HCT116 (cell line): ENCODE measurements at regions of chr19 and their contacts with region 1.

Region 1: DNA sequence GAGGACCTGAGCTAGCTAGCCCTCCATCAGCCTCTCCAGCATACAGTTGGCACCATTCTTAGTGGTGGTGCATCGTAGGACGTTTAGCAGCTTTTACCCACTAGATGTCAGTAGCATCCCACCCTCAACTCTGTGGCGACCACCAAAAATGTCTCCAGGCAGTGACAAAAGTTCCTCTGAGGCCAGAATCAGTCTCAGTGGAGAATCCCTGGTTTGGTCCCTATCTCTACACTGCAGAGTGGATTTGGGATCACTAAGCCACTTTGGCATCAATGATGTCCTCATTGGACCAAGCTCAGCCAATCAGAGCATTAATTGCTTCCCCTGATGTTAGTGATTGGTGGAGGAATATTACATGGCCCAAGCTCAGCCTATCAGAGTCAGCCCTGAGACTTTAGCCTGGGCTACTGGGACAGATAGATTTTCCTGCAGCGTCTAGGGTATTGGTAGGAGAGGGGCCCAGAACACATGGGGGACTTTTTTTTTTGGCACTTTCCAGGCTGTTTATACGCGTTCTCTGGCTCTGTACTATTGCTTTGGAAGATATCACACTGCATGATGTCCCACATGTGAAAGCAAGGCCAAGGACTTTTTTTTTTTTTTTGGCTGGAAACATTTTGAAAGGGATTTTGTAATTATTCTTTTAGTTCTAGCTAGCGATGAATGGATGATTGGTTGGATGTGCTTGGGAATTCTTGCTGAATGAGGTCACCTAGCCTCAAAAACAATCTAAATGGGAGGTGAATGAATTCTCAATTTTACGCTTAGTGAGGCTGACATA is 7.0 kb downstream of the TMEM221 start:
- DNase-seq: no peak
- ATAC-seq: peak; percentile 92
- H3K4me3 ChIP-seq: no peak overlapping the region
- H3K27ac ChIP-seq: no peak overlapping the region
- H3K4me1 ChIP-seq: no peaks in the 10 kb centered on the region
- H3K27me3 ChIP-seq: no peaks in the 10 kb centered on the region
- CTCF ChIP-seq: peak; percentile 48 to 61 (median 52); a peak in 5 of 6 replicates
- POLR2A ChIP-seq: no peak
- RAD21 ChIP-seq: peak; percentile 75

Region 2: DNA sequence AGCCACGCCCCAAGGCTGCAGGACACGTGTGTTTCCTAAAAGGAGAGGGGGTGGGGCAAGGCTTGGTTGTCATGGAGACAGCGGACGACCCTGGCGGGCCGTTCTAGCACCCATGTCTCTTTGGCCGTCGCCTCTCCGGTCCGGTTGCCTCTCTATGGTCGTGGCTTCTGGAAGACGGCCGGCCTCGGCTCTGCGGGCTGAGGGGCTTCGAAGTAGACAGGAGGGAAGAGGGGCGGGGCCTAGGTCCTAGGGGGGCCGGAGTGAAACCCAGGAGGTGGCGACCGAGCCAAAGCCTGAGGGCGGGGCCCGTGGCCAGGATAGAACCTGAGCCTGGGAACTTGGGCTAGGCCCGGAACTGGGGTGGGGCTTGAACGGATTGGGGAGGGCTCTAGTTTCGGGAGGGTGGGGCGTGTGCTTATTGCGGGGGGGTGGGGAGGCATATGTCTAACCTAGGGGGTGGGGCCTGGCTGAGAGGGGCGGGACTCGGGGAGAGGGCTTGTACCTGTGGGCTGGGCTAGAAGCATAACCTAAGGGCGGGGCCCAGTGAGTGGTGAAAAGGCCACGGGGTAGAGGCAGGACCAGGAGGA is 28.1 kb after region 1 on chr19:
- CTCF ChIA-PET with region 1: interaction called, 16 read pairs
- POLR2A ChIA-PET with region 1: no interaction called
- RAD21 ChIA-PET with region 1: interaction called in 1 of 2 experiments, 4 read pairs
- intact Hi-C with region 1: no loop called
- DNase-seq: peak; percentile 96
- ATAC-seq: peak; percentile 73
- H3K4me3 ChIP-seq: peak overlapping the region; percentile 66 to 78
- H3K27ac ChIP-seq: peak overlapping the region; percentile 83
- H3K4me1 ChIP-seq: peaks cover 37 to 67% of the 10 kb centered on the region in 2 experiments
- H3K27me3 ChIP-seq: no peaks in the 10 kb centered on the region
- CTCF ChIP-seq: no peak
- POLR2A ChIP-seq: no peak
- RAD21 ChIP-seq: no peak

Region 3: DNA sequence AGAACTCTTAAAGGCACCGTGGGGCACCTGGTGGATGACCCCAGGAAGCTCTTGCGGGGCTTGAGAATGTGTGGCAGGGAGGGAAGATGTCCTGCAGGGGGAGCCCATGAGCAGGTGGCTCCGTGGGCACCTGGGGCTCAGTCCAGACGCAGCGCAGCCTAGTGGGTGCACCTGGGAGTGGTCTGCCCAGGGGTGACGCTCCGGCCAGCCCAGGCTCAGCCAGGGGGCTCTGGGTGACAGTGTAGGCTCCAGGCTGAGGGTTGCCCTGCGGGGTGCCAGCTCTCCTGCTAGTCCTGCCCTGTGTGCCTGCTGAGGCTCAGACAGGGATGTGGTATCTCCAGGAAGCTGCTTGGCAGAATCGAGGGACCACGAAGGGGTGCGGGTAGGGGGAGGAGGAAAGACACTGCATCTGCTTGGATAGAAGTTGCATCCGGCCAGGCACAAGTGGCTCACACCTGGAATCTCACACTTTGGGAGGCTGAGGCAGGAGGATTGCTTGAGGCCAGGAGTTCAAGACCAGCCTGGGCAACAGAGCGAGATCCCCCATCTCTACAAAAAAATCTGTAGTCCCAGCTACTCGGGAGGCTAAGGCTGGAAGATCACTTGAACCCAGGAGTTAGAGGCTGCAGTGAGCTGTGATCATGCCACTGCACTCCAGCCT is 55.0 kb after region 1 on chr19:
- CTCF ChIA-PET with region 1: interaction called, 4 read pairs
- POLR2A ChIA-PET with region 1: no interaction called
- RAD21 ChIA-PET with region 1: no interaction called
- intact Hi-C with region 1: loop called (anchors 2 kb)
- DNase-seq: peak; percentile 71
- ATAC-seq: peak; percentile 96
- H3K4me3 ChIP-seq: no peak overlapping the region
- H3K27ac ChIP-seq: no peak overlapping the region; the same call in 1 of the 2 replicates
- H3K4me1 ChIP-seq: peaks cover 11 to 31% of the 10 kb centered on the region in 2 experiments
- H3K27me3 ChIP-seq: no peaks in the 10 kb centered on the region
- CTCF ChIP-seq: peak; percentile 99 to 100 (median 99)
- POLR2A ChIP-seq: no peak
- RAD21 ChIP-seq: peak; percentile 81

Region 4: DNA sequence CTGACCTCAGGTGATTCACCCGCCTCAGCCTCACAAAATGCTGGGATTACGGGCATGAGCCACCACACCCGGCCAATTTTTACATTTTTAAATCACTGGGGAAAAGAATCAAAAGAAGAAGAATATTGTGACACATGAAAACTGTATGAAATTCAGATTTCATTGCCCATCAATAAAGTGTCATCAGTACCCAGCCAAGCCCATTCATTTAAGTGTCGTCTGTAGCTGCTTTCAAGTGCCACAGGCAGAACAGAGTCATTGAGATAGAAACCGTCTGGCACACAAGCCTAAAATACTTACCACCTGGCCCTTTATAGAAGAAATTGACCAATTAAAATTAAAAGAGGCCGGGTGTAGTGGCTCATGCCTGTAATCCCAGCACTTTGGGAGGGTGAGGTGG is 129.4 kb after region 1 on chr19:
- CTCF ChIA-PET with region 1: no interaction called
- POLR2A ChIA-PET with region 1: no interaction called
- RAD21 ChIA-PET with region 1: no interaction called
- intact Hi-C with region 1: loop called (anchors 5 kb)
- DNase-seq: no peak
- ATAC-seq: no peak
- H3K4me3 ChIP-seq: no peak overlapping the region
- H3K27ac ChIP-seq: no peak overlapping the region
- H3K4me1 ChIP-seq: peaks cover 0 to 8% of the 10 kb centered on the region in 2 experiments; a peak in 1 of 4 replicates
- H3K27me3 ChIP-seq: no peaks in the 10 kb centered on the region
- CTCF ChIP-seq: no peak
- POLR2A ChIP-seq: no peak
- RAD21 ChIP-seq: no peak